ENCODE measurements at regions of chr1 and their contacts with region 1.

Region 1: GRCh38 chr1:116853670-116854402 is 55.9 kb upstream of the PTGFRN start:
- DNase-seq: no peak
- ATAC-seq: peak in 1 of 2 donors; percentile 49
- H3K4me3 ChIP-seq: no peak overlapping the region
- H3K27ac ChIP-seq: no peak overlapping the region
- H3K4me1 ChIP-seq: peaks cover 5% of the 10 kb centered on the region
- H3K27me3 ChIP-seq: no peaks in the 10 kb centered on the region

Region 2: GRCh38 chr1:116769561-116769977 is 84.3 kb before region 1 on chr1:
- intact Hi-C with region 1: no loop called
- DNase-seq: peak in 1 of 3 donors; percentile 48
- ATAC-seq: no peak
- H3K4me3 ChIP-seq: no peak overlapping the region
- H3K27ac ChIP-seq: no peak overlapping the region
- H3K4me1 ChIP-seq: no peaks in the 10 kb centered on the region
- H3K27me3 ChIP-seq: no peaks in the 10 kb centered on the region

Region 3: GRCh38 chr1:117045644-117046043 is 191.8 kb after region 1 on chr1:
- intact Hi-C with region 1: loop called in 2 of 4 experiments (anchors 5 to 10 kb)
- DNase-seq: no peak
- ATAC-seq: no peak
- H3K4me3 ChIP-seq: no peak overlapping the region
- H3K27ac ChIP-seq: no peak overlapping the region
- H3K4me1 ChIP-seq: no peaks in the 10 kb centered on the region
- H3K27me3 ChIP-seq: no peaks in the 10 kb centered on the region

Region 4: DNA sequence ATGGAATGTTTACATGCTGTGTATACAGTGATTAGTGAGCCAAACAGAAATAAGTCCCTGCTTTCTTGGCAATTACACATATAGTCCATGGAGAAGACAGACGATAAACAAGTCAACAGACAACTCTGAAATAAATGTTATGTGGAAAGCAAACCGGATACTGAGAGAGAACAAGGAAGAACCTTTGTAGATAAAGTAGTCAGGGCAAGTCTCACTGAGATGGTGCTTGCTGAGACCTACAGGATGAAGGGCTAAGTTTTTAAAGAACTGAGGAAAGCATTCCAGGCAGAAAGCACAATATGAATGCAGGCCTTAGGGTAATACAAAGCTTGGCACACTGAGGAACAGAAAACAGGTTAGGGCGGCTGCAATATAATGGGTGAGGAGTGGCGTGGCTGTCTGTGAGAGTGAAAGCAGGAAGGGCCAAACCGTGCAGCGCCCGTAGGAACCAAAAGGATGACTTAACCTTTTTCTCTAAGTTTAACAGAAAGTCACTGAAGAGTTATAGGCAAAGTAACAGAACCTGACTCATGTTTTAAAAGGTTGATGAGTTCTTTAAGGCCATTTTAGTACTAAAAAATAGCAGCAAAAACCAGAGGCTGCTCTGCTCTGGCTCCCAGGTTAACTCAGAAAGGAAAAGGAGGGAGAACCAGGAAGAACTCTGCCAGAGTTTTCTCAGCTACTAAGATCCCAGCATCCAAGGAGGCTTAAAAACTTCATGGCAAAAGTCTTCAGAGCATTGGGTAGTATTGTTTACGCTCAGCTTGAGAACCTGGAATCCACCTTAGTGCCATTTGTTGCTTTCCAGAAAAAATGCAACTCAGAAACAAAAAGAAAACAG is 197.6 kb after region 1 on chr1:
- intact Hi-C with region 1: loop called in 3 of 4 experiments (anchors 5 to 10 kb)
- DNase-seq: peak in 1 of 3 donors; percentile 51
- ATAC-seq: peak; percentile 61 to 64
- H3K4me3 ChIP-seq: peak overlapping the region; percentile 41
- H3K27ac ChIP-seq: no peak overlapping the region
- H3K4me1 ChIP-seq: no peaks in the 10 kb centered on the region
- H3K27me3 ChIP-seq: no peaks in the 10 kb centered on the region

Region 5: DNA sequence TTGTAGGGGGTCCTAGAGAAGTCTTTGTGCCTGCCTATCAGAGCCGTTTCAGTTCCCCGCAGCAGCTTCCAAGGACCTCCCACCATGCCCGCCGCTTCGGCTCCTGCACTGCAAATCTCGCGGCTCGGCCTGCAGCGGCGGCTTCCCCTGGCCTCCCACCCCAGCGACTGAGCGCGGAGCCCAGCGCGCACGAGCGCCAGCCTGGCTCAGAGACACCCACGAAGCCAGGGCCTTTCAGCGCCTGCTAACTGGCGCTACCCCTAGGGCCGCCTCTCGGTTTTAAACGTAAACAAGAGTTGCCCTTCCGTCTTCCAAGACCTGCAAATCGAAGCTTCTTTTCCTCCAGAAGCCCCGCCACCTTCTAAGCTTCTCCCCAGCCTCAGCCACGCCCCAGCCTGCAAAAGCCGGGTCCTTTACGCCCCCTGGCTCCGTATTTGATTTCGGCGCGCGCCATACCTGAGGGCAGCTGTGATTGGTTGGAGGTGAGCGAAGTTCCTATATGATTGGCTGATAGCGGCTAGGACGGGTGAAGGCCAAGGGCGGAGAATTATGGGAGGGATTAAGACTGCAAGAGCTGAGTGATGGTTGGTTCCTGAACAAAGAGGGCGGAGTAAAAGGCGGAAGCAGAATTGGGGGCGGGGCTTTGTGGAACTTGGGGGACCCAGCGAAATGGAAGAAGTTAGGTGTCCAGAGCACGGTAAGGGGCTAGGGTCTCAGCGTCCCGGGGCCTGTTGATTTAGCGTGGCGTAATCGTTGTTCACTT is 206.0 kb after region 1 on chr1 and contains the start of gene TTF2:
- intact Hi-C with region 1: loop called in 1 of 4 experiments (anchors 5 kb)
- DNase-seq: peak; percentile 90 to 94 (median 93)
- ATAC-seq: peak; percentile 99 to 100
- H3K4me3 ChIP-seq: peak within 1 kb of the TSS; percentile 53
- H3K27ac ChIP-seq: peak within 1 kb of the TSS; percentile 50
- H3K4me1 ChIP-seq: no peaks in the 10 kb centered on the region
- H3K27me3 ChIP-seq: no peaks in the 10 kb centered on the region
- total RNA-seq, gene TTF2: 8.7 to 10.6 (median 9.2) TPM